ENCODE measurements at regions of chr15 and their contacts with region 1.

Region 1: GRCh38 chr15:91469632-91470567 is 369.8 kb downstream of the SV2B start:
- DNase-seq: peak in 8 of 9 donors; percentile 29 to 81 (median 72)
- ATAC-seq: peak; percentile 89
- H3K4me3 ChIP-seq: no peak overlapping the region
- H3K4me3 Mint-ChIP-seq: peak overlapping the region; percentile 6 to 66 (median 52)
- H3K27ac ChIP-seq: peak overlapping the region; percentile 63
- H3K27ac Mint-ChIP-seq: peak overlapping the region; percentile 71 to 96 (median 89)
- H3K4me1 ChIP-seq: peaks cover 47 to 55% of the 10 kb centered on the region in 2 donors
- H3K4me1 Mint-ChIP-seq: peaks cover 29 to 77% (median 58%) of the 10 kb centered on the region in 7 donors
- H3K27me3 ChIP-seq: no peaks in the 10 kb centered on the region
- H3K27me3 Mint-ChIP-seq: no peaks in the 10 kb centered on the region

Region 2: DNA sequence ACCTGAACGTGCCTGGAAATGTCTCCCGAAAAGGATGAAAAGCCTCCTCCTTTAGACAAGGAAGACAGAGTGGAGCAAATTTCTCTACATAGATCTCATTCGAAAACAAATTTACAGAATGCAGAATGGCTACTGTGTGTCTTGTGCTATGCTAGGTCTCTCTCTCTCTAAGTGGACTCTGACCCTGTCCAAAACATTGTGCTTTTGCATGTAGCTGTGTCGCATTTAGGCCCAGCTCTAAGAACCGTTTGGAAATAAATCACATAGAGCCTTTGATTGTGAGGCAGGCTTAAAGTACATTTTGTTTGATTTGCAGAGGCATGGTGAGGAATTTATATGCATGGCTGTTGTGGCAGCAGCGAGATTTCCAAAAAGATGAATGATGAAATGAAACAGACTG is 171.8 kb before region 1 on chr15:
- CTCF ChIA-PET with region 1: no interaction called
- POLR2A ChIA-PET with region 1: no interaction called
- intact Hi-C with region 1: no loop called
- DNase-seq: no peak
- ATAC-seq: no peak
- H3K4me3 ChIP-seq: no peak overlapping the region
- H3K4me3 Mint-ChIP-seq: no peak overlapping the region
- H3K27ac ChIP-seq: no peak overlapping the region
- H3K27ac Mint-ChIP-seq: no peak overlapping the region
- H3K4me1 ChIP-seq: peaks cover 6 to 7% of the 10 kb centered on the region in 2 donors
- H3K4me1 Mint-ChIP-seq: peaks cover 3 to 10% (median 5%) of the 10 kb centered on the region in 7 donors
- H3K27me3 ChIP-seq: no peaks in the 10 kb centered on the region
- H3K27me3 Mint-ChIP-seq: peaks cover 0 to 44% (median 4%) of the 10 kb centered on the region in 5 donors

Region 3: DNA sequence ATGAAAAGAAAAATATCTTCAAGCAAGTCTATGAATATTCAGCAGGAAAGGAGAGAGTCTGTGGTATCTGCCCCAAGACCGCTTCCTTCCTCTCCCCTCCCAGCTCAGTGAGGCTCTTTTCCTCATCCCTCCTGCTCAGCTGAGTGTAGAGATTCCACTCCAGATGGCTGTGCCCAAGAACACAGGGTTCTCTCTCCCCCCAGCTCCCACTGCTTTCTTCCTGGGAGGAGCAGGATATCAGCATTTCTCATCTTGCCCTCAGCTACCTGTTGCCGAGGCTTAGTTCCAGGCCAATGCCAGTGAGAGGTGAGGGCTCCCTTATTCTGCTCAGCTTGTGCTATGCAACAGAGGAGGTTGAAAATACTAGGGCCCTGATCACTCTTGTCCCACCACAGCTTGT is 157.9 kb before region 1 on chr15:
- CTCF ChIA-PET with region 1: no interaction called
- POLR2A ChIA-PET with region 1: no interaction called
- intact Hi-C with region 1: loop called (anchors 5 kb)
- DNase-seq: peak in 4 of 9 donors; percentile 28 to 53 (median 44)
- ATAC-seq: peak; percentile 78
- H3K4me3 ChIP-seq: peak overlapping the region; percentile 18
- H3K4me3 Mint-ChIP-seq: peak overlapping the region; percentile 68 to 83 (median 79)
- H3K27ac ChIP-seq: no peak overlapping the region
- H3K27ac Mint-ChIP-seq: peak overlapping the region in 5 of 9 donors; percentile 3 to 71 (median 35)
- H3K4me1 ChIP-seq: peaks cover 40 to 61% of the 10 kb centered on the region in 2 donors
- H3K4me1 Mint-ChIP-seq: peaks cover 37 to 90% (median 70%) of the 10 kb centered on the region in 7 donors
- H3K27me3 ChIP-seq: no peaks in the 10 kb centered on the region
- H3K27me3 Mint-ChIP-seq: peaks cover 0 to 60% (median 0%) of the 10 kb centered on the region in 5 donors

Region 4: DNA sequence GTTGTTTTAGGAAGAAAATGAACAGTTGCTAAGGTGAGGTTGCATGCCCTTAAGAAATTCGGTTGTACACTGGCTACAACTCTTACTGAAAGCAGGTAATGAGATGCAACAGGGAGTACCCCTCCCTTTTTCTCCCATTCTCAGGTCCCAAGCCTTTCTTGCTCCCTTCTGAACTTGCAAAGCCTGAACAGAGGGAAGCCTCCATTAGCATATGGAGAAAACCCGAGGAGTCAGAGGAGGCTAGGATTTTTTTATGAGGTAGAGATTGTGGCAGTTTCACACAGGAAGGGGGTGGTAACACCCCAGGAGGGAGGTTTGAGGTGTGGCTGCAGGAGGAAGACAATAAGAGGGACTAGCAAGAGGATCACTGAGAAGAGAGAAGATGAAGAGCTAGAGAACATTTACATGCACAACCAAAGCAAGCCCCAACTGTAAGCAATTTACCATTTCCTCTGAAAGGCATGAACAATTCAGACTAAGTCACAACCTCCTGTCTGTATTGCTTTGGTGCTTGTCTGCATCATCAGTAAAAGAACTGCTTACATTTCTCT is 47.1 kb before region 1 on chr15:
- CTCF ChIA-PET with region 1: no interaction called
- POLR2A ChIA-PET with region 1: no interaction called
- intact Hi-C with region 1: loop called (anchors 2 to 5 kb)
- DNase-seq: peak in 4 of 9 donors; percentile 5 to 45 (median 14)
- ATAC-seq: peak; percentile 61
- H3K4me3 ChIP-seq: no peak overlapping the region
- H3K4me3 Mint-ChIP-seq: peak overlapping the region in 7 of 10 donors; percentile 1 to 79 (median 54)
- H3K27ac ChIP-seq: no peak overlapping the region
- H3K27ac Mint-ChIP-seq: peak overlapping the region in 8 of 9 donors; percentile 19 to 91 (median 68)
- H3K4me1 ChIP-seq: peaks cover 26 to 28% of the 10 kb centered on the region in 2 donors
- H3K4me1 Mint-ChIP-seq: peaks cover 9 to 56% (median 26%) of the 10 kb centered on the region in 7 donors
- H3K27me3 ChIP-seq: no peaks in the 10 kb centered on the region
- H3K27me3 Mint-ChIP-seq: peaks cover 0 to 19% (median 0%) of the 10 kb centered on the region in 5 donors

Region 5: DNA sequence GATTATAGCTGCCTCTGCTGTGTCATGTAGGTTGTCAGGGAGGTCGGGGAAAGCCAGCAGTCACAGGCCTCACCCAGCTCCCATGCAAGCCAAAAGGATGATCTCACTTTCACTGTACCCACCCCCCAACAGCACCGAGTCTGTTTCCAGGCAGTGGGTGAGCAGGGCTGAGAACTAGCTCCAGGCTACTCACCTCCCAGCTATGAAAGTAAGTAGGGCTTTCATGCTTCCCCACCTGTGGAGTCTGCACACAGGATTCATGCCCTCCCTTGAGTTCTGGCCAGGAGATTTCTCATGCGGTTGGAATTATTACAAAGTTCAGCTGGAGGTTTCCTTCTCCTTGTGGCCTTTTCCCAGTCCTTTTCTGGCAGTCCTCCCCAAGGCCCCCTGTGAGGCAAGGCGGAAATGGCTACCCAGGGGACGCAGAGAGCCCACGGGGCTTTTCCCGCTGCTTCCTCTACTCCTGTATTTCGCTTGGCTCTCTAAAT is 13.6 kb before region 1 on chr15:
- CTCF ChIA-PET with region 1: interaction called, 4 read pairs
- POLR2A ChIA-PET with region 1: interaction called, 3 read pairs
- intact Hi-C with region 1: loop called (anchors 1 to 2 kb)
- DNase-seq: no peak
- ATAC-seq: no peak
- H3K4me3 ChIP-seq: no peak overlapping the region
- H3K4me3 Mint-ChIP-seq: no peak overlapping the region
- H3K27ac ChIP-seq: no peak overlapping the region
- H3K27ac Mint-ChIP-seq: peak overlapping the region in 2 of 9 donors; percentile 31 to 72
- H3K4me1 ChIP-seq: peaks cover 16% of the 10 kb centered on the region in 2 donors
- H3K4me1 Mint-ChIP-seq: peaks cover 9 to 59% (median 37%) of the 10 kb centered on the region in 7 donors
- H3K27me3 ChIP-seq: no peaks in the 10 kb centered on the region
- H3K27me3 Mint-ChIP-seq: peaks cover 0 to 9% (median 0%) of the 10 kb centered on the region in 5 donors

Region 6: DNA sequence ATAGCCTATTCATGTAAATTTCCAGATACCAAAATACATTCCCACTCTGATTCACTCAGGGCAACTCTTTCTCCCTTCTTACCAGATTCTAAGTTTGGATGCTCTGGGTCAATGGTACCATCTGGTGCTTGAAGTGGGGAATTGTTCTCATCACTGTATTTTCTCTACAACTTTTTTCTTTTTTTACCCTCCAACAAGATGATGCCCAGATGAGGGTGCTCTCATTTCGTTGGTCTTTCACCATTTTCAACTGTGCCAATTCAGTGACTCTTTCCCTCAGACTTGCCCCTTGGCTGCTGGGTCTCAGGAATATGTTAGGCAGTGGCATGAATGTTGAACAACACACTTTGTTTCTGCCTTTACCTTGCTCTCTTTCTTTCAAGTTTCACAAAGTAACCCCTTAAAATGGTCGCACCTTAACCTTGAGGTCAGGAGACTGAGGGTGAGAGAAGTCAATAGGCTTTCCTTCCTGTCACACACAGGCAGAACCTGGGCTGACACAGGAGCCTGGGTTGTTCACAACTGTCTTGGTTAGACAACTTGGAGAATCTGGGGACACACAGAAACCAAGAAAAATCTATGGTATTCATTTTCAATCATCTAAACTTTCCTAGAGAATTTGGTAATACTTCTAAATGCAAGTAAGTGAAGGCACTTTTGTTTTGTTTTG is 52.9 kb after region 1 on chr15:
- CTCF ChIA-PET with region 1: no interaction called
- POLR2A ChIA-PET with region 1: no interaction called
- intact Hi-C with region 1: loop called (anchors 5 kb)
- DNase-seq: peak in 7 of 9 donors; percentile 12 to 54 (median 33)
- ATAC-seq: peak; percentile 41
- H3K4me3 ChIP-seq: no peak overlapping the region
- H3K4me3 Mint-ChIP-seq: peak overlapping the region in 1 of 10 donors; percentile 15
- H3K27ac ChIP-seq: no peak overlapping the region
- H3K27ac Mint-ChIP-seq: peak overlapping the region in 4 of 9 donors; percentile 22 to 75 (median 66)
- H3K4me1 ChIP-seq: peaks cover 9 to 12% of the 10 kb centered on the region in 2 donors
- H3K4me1 Mint-ChIP-seq: peaks cover 9 to 56% (median 18%) of the 10 kb centered on the region in 7 donors
- H3K27me3 ChIP-seq: no peaks in the 10 kb centered on the region
- H3K27me3 Mint-ChIP-seq: peaks cover 0 to 13% (median 0%) of the 10 kb centered on the region in 5 donors

Region 7: GRCh38 chr15:91535856-91536500 is 66.1 kb after region 1 on chr15:
- CTCF ChIA-PET with region 1: no interaction called
- POLR2A ChIA-PET with region 1: no interaction called
- intact Hi-C with region 1: loop called in 1 of 2 experiments (anchors 2 kb)
- DNase-seq: no peak
- ATAC-seq: no peak
- H3K4me3 ChIP-seq: no peak overlapping the region
- H3K4me3 Mint-ChIP-seq: no peak overlapping the region
- H3K27ac ChIP-seq: no peak overlapping the region
- H3K27ac Mint-ChIP-seq: peak overlapping the region in 1 of 9 donors; percentile 43
- H3K4me1 ChIP-seq: no peaks in the 10 kb centered on the region
- H3K4me1 Mint-ChIP-seq: no peaks in the 10 kb centered on the region
- H3K27me3 ChIP-seq: no peaks in the 10 kb centered on the region
- H3K27me3 Mint-ChIP-seq: peaks cover 0 to 8% (median 0%) of the 10 kb centered on the region in 5 donors

Measured in naive thymus-derived CD4-positive, alpha-beta T cell (primary cell).